ENCODE measurements at regions of chr7 and their contacts with region 1.

Region 1: DNA sequence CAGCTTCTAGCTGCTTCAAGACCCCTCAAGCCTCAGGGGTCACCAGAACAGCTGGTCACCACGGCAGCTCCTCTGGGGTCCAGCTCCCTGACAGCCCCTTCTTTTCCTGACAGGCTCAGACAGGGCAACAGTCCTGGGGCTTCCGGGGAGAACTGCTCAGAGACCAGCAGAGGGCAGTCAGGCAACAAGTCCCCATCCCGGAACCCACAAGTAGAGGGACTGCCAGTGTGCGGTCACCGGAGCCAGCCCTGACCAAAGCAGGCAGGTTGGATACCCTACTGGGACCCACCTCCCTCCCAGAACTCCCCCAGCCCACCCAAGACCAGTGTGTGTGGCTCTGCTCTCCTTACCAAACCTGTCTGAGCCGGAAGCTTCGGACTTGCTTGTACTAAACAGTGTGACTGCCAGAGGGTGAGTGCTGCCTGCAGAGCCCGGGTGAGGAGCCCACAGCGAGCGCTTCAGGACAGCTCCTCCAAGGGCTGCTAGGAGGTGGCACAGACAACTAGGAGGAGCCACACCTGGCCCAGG is 40.3 kb downstream of the YKT6 start:
- DNase-seq: peak; percentile 27
- ATAC-seq: peak; percentile 95
- H3K4me3 ChIP-seq: no peak overlapping the region
- H3K27ac ChIP-seq: no peak overlapping the region
- H3K4me1 ChIP-seq: no peaks in the 10 kb centered on the region
- H3K27me3 ChIP-seq: no peaks in the 10 kb centered on the region; a peak in 1 of 4 replicates
- CTCF ChIP-seq: peak; percentile 71 to 93 (median 82)
- EP300 ChIP-seq: no peak
- POLR2A ChIP-seq: no peak
- RAD21 ChIP-seq: peak; percentile 82

Region 2: DNA sequence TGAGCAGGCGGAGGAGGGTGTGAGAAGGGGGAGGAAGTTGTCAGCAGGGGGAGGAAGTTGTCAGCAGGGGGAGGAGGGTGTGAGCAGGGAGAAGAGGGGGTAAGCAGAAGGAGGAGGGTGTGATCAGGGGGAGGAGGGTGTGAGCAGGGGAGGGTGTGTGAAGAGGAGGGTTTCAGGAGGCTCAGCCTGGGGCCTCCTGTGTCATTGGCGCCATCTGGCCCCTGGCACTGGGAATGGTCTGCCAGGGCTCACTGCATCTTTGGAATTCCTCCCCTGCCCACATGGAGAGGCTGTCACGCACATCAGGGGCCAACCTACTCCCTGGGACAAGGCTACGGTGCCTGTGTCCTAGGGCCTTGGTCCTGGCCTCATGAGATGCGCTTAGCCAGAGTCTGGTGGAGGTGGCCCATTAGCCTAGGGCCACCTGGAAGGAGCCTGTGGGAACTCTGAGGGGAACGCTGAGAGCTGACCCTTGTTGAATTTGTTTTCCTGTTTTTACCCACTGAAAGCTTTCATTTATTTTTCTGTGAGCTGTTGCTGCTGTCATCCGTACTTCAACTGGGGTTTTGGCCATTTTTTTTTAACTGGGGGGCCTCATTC is 66.4 kb after region 1 on chr7:
- CTCF ChIA-PET with region 1: interaction called, 6 read pairs
- POLR2A ChIA-PET with region 1: no interaction called
- RAD21 ChIA-PET with region 1: interaction called, 3 read pairs
- SMC1A ChIA-PET with region 1: interaction called, 4 read pairs
- in situ Hi-C with region 1: no loop called
- intact Hi-C with region 1: loop called (anchors 2 kb)
- DNase-seq: no peak
- ATAC-seq: peak; percentile 63
- H3K4me3 ChIP-seq: no peak overlapping the region
- H3K27ac ChIP-seq: no peak overlapping the region
- H3K4me1 ChIP-seq: no peaks in the 10 kb centered on the region; the same call in 1 of the 2 replicates
- H3K27me3 ChIP-seq: peaks cover 0 to 2% of the 10 kb centered on the region in 2 experiments; a peak in 3 of 4 replicates
- CTCF ChIP-seq: peak; percentile 22 to 56 (median 44); a peak in 4 of 6 replicates
- EP300 ChIP-seq: no peak
- POLR2A ChIP-seq: no peak
- RAD21 ChIP-seq: peak; percentile 58

Region 3: DNA sequence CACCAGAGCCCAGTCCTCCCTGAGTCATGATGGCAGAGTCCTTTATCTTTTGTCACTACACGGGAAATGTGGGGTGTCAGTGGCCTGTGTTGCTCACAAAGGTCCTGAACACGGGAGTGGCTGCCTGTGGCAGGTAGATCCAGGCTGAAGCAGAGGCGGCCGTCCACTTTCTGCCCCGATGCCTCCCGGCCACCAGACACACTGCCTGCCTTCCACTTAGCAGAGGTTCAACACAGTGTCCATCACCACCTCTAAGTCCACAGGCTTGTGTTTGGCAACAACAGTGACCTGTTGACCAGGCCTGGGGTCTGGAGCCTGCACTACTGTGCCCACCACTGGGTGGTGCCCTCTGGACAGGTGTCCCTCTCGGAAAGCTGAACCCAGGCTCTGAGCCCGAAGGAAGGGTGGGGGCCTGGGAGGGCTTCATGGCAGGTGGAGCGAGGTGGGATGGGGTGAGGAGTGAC is 134.2 kb after region 1 on chr7:
- CTCF ChIA-PET with region 1: no interaction called
- POLR2A ChIA-PET with region 1: no interaction called
- RAD21 ChIA-PET with region 1: interaction called, 3 read pairs
- SMC1A ChIA-PET with region 1: interaction called, 5 read pairs
- in situ Hi-C with region 1: no loop called
- intact Hi-C with region 1: loop called (anchors 5 kb)
- DNase-seq: no peak
- ATAC-seq: peak; percentile 41
- H3K4me3 ChIP-seq: no peak overlapping the region
- H3K27ac ChIP-seq: no peak overlapping the region
- H3K4me1 ChIP-seq: peaks cover 14% of the 10 kb centered on the region
- H3K27me3 ChIP-seq: no peaks in the 10 kb centered on the region
- CTCF ChIP-seq: peak; percentile 13 to 38 (median 26); a peak in 2 of 6 replicates
- EP300 ChIP-seq: no peak
- POLR2A ChIP-seq: no peak
- RAD21 ChIP-seq: peak; percentile 33; the same call in 1 of the 2 replicates

Region 4: GRCh38 chr7:44484482-44485313 is 243.7 kb after region 1 on chr7:
- CTCF ChIA-PET with region 1: interaction called, 18 read pairs
- POLR2A ChIA-PET with region 1: no interaction called
- RAD21 ChIA-PET with region 1: interaction called, 4 read pairs
- SMC1A ChIA-PET with region 1: interaction called, 4 read pairs
- in situ Hi-C with region 1: no loop called
- intact Hi-C with region 1: no loop called
- DNase-seq: no peak
- ATAC-seq: no peak
- H3K4me3 ChIP-seq: no peak overlapping the region
- H3K27ac ChIP-seq: no peak overlapping the region
- H3K4me1 ChIP-seq: no peaks in the 10 kb centered on the region
- H3K27me3 ChIP-seq: no peaks in the 10 kb centered on the region
- CTCF ChIP-seq: no peak
- EP300 ChIP-seq: no peak
- POLR2A ChIP-seq: no peak
- RAD21 ChIP-seq: no peak

Region 5: DNA sequence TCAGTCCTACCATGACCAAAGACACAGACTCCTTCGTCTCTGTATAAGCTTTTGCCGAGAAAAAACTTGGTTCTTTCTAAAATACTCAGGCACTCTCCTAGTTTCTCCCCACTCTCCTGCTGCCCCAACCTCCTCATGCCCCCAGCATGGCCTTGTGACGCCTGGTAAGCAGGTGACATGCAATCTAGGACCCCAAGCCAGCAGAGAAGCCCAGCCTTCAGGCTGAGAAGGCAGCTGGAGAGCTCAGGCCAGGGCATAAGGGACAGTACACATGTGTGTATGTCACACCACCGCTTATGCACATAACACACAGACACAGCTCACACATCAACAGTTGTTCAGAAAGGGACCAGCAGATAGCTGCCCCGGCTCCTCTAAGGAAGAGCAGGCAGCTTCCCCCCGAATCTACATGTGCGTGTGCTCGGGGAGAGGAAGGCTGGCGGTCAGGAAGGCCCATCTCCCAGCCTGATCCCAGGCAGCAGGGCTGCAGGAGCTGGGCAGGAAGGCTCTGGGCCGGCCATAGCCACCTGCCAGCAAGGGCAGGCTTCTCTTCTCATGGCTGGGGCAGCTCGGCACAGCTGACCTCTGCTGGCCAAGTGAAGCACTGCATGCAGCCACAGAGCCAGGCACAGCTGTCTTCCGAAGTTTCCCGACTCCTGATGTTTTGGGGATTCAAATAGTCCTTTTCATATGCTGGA is 324.2 kb after region 1 on chr7:
- CTCF ChIA-PET with region 1: interaction called, 33 read pairs
- POLR2A ChIA-PET with region 1: no interaction called
- RAD21 ChIA-PET with region 1: interaction called, 30 read pairs
- SMC1A ChIA-PET with region 1: interaction called, 12 read pairs
- in situ Hi-C with region 1: no loop called
- intact Hi-C with region 1: loop called (anchors 1 kb)
- DNase-seq: no peak
- ATAC-seq: peak; percentile 95
- H3K4me3 ChIP-seq: no peak overlapping the region
- H3K27ac ChIP-seq: no peak overlapping the region
- H3K4me1 ChIP-seq: no peaks in the 10 kb centered on the region
- H3K27me3 ChIP-seq: no peaks in the 10 kb centered on the region
- CTCF ChIP-seq: peak; percentile 94 to 97 (median 97); a peak in 5 of 6 replicates
- EP300 ChIP-seq: no peak
- POLR2A ChIP-seq: no peak
- RAD21 ChIP-seq: peak; percentile 62

Measured in GM12878 (cell line).